Endothelial cell of umbilical vein (primary cell): ENCODE measurements at regions of chr22 and their contacts with region 1.

Region 1: GRCh38 chr22:36387752-36388518 is at the start of gene MYH9:
- DNase-seq: peak; percentile 100
- H3K4me3 ChIP-seq: peak within 1 kb of the TSS; percentile 95 to 99 (median 97)
- H3K27ac ChIP-seq: peak within 1 kb of the TSS; percentile 92
- H3K4me1 ChIP-seq: peaks cover 27% of the 10 kb centered on the region
- H3K27me3 ChIP-seq: no peaks in the 10 kb centered on the region
- CTCF ChIP-seq: no peak
- POLR2A ChIP-seq: peak; percentile 98
- total RNA-seq, gene MYH9: 1,331 and 1,413 TPM in 2 replicates

Region 2: DNA sequence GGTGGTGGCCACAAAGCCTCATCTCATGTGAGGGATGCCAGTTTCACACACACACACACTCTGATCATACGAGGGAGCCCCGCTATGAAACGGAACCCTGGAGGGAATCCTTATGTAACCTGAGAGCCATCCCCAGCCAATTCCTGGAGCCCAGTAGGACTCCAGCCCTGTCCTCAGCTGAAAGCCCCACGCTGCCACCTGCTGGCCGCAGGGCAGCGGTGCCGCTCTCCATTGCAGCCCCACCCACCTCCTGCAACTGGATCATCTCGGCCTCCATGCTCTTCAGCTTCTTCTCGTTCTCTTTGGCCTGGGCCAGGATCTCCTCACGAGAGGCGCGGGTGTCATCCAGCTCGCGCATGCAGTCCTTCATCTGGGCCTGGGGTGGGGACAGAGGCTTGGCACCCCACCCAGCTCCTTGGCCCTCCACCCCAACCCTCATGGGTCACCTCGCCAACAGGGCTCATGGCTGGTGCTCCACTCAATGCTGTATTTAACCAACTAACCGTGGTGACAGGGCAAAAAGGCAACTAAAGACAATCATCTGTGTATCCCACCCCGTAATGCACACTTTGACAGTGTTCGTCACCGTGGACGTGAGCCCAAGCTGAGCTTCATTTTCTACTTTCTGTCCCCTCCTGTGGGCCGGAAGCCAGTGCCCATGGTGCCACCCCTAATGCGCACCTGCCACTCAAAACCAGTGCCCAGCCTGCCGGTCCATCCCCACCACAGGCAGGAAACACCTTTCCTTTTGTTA is 101.3 kb before region 1 on chr22:
- CTCF ChIA-PET with region 1: no interaction called
- POLR2A ChIA-PET with region 1: no interaction called
- dilution Hi-C with region 1: no loop called
- intact Hi-C with region 1: no loop called
- DNase-seq: peak; percentile 68
- H3K4me3 ChIP-seq: no peak overlapping the region
- H3K27ac ChIP-seq: no peak overlapping the region
- H3K4me1 ChIP-seq: no peaks in the 10 kb centered on the region
- H3K27me3 ChIP-seq: no peaks in the 10 kb centered on the region
- CTCF ChIP-seq: peak; percentile 95 to 96
- POLR2A ChIP-seq: peak; percentile 41

Region 3: GRCh38 chr22:36301384-36301828 is 86.5 kb before region 1 on chr22:
- CTCF ChIA-PET with region 1: no interaction called
- POLR2A ChIA-PET with region 1: no interaction called
- dilution Hi-C with region 1: no loop called
- intact Hi-C with region 1: loop called (anchors 1 kb)
- DNase-seq: peak; percentile 60
- H3K4me3 ChIP-seq: no peak overlapping the region
- H3K27ac ChIP-seq: no peak overlapping the region
- H3K4me1 ChIP-seq: peaks cover 10% of the 10 kb centered on the region
- H3K27me3 ChIP-seq: no peaks in the 10 kb centered on the region
- CTCF ChIP-seq: peak; percentile 88
- POLR2A ChIP-seq: no peak

Region 4: GRCh38 chr22:36350751-36351594 is 37.0 kb before region 1 on chr22:
- CTCF ChIA-PET with region 1: interaction called, 4 read pairs
- POLR2A ChIA-PET with region 1: interaction called, 4 read pairs
- dilution Hi-C with region 1: no loop called
- intact Hi-C with region 1: loop called (anchors 5 kb)
- DNase-seq: peak; percentile 56
- H3K4me3 ChIP-seq: no peak overlapping the region
- H3K27ac ChIP-seq: peak overlapping the region; percentile 60
- H3K4me1 ChIP-seq: peaks cover 86% of the 10 kb centered on the region
- H3K27me3 ChIP-seq: no peaks in the 10 kb centered on the region
- CTCF ChIP-seq: no peak
- POLR2A ChIP-seq: no peak

Region 5: GRCh38 chr22:36369922-36370791 is 17.8 kb before region 1 on chr22:
- CTCF ChIA-PET with region 1: interaction called, 4 read pairs
- POLR2A ChIA-PET with region 1: interaction called, 13 read pairs
- dilution Hi-C with region 1: no loop called
- intact Hi-C with region 1: loop called (anchors 1 kb)
- DNase-seq: peak; percentile 76
- H3K4me3 ChIP-seq: peak overlapping the region in 1 of 3 experiments; percentile 0
- H3K27ac ChIP-seq: peak overlapping the region; percentile 91
- H3K4me1 ChIP-seq: peaks cover 97% of the 10 kb centered on the region
- H3K27me3 ChIP-seq: no peaks in the 10 kb centered on the region
- CTCF ChIP-seq: no peak
- POLR2A ChIP-seq: peak; percentile 20

Region 6: DNA sequence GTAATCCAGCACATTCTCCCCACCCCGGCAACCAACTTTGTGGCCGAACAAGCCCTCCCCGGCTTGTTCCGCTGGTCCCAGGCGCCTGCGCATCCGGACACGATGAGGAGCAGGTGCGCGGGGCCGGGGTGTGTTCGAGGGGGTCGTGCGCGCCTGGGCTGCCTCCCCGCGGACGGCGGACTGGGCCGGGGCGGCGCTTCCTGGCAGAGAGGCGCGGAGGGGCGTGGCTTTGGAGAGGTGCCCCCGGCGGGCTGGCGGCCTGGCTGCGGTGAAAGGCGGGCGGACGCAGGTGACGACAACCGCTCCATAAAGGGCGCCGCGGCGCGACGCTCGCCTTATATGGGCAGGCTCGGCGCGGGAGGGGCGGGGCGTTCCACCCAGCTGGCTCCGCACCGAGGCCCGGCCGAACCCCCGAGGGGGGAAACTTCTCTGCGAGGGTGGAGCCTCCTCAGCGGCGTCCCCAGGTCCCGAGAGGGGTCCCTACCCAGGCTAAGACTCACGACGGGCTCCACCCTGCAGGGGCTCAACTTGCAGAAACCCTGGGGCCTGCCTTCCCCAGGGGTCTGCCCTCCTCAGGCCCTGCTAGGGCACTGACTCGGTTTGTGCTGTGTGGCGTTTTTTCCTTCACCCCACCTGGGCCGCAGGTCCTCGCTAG is 67.1 kb after region 1 on chr22:
- CTCF ChIA-PET with region 1: interaction called, 4 read pairs
- POLR2A ChIA-PET with region 1: interaction called, 4 read pairs
- dilution Hi-C with region 1: no loop called
- intact Hi-C with region 1: loop called (anchors 1 kb)
- DNase-seq: peak; percentile 92
- H3K4me3 ChIP-seq: peak overlapping the region; percentile 20 to 50 (median 47)
- H3K27ac ChIP-seq: peak overlapping the region; percentile 72
- H3K4me1 ChIP-seq: peaks cover 24% of the 10 kb centered on the region
- H3K27me3 ChIP-seq: no peaks in the 10 kb centered on the region
- CTCF ChIP-seq: peak in 1 of 2 donors; percentile 8
- POLR2A ChIP-seq: peak; percentile 32